ENCODE measurements at regions of chr16 and their contacts with region 1.

Region 1: GRCh38 chr16:9090960-9091866 is at the start of gene HAPSTR1:
- DNase-seq: peak; percentile 98 to 99
- H3K4me3 ChIP-seq: peak within 1 kb of the TSS; percentile 96
- H3K27ac ChIP-seq: peak within 1 kb of the TSS; percentile 66
- H3K4me1 ChIP-seq: peaks cover 24% of the 10 kb centered on the region
- H3K27me3 ChIP-seq: no peaks in the 10 kb centered on the region
- CTCF ChIP-seq: no peak
- total RNA-seq, gene HAPSTR1: 61.1 and 82.8 TPM in 2 replicates

Region 2: GRCh38 chr16:8868416-8869211 is 222.6 kb before region 1 on chr16 and contains the start of gene CARHSP1:
- CTCF ChIA-PET with region 1: interaction called, 4 read pairs
- POLR2A ChIA-PET with region 1: interaction called, 45 read pairs
- intact Hi-C with region 1: loop called (anchors 10 kb)
- DNase-seq: peak; percentile 83 to 90
- H3K4me3 ChIP-seq: peak within 1 kb of the TSS; percentile 88
- H3K27ac ChIP-seq: peak within 1 kb of the TSS; percentile 55
- H3K4me1 ChIP-seq: peaks cover 41% of the 10 kb centered on the region
- H3K27me3 ChIP-seq: no peaks in the 10 kb centered on the region
- CTCF ChIP-seq: no peak
- total RNA-seq, gene CARHSP1: 179 and 186 TPM in 2 replicates

Region 3: DNA sequence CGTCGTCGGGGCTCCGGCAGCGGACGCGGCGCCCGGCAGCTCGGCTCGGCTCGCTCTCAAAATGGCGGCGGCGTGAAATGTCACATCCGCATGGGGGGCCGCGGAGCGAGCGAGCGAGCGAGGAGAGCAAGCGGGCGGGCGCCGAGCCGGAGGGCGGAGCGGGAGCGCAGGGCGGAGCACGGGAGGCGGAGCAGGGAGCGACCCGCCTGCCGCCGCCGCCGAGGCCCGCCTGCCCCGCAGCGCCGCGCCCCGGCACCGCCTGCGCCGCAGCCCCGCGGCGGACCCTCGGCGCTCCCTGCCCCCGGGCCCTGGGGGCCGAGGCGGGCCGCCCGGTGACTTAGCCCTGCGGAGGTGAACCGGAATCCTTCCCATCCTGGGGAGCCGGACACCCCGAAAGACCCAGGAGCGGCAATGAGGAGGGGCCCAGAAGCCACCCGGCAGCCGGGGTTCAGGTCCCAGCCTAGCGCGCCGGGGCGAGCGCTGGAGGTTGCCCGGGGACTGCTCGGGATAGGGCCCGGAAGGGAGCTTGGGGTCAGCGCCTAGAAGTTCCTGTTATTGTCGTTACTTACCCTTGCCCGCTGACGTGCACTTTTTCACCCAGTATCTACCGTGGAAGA is 127.3 kb before region 1 on chr16 and contains the start of gene USP7:
- CTCF ChIA-PET with region 1: no interaction called
- POLR2A ChIA-PET with region 1: interaction called, 7 read pairs
- intact Hi-C with region 1: loop called (anchors 2 kb)
- DNase-seq: peak; percentile 48 to 92
- H3K4me3 ChIP-seq: peak within 1 kb of the TSS; percentile 76
- H3K27ac ChIP-seq: no peak within 1 kb of the TSS; the same call in 1 of the 2 replicates
- H3K4me1 ChIP-seq: peaks cover 46% of the 10 kb centered on the region
- H3K27me3 ChIP-seq: no peaks in the 10 kb centered on the region
- CTCF ChIP-seq: no peak
- total RNA-seq, gene USP7: 113 and 167 TPM in 2 replicates

Region 4: GRCh38 chr16:9068886-9069285 is 22.3 kb before region 1 on chr16:
- CTCF ChIA-PET with region 1: no interaction called
- POLR2A ChIA-PET with region 1: interaction called, 13 read pairs
- intact Hi-C with region 1: no loop called
- DNase-seq: no peak
- H3K4me3 ChIP-seq: no peak overlapping the region
- H3K27ac ChIP-seq: peak overlapping the region; percentile 56; the same call in 1 of the 2 replicates
- H3K4me1 ChIP-seq: peaks cover 30% of the 10 kb centered on the region
- H3K27me3 ChIP-seq: no peaks in the 10 kb centered on the region
- CTCF ChIP-seq: no peak

Region 5: GRCh38 chr16:9123871-9124270 is 32.7 kb after region 1 on chr16:
- CTCF ChIA-PET with region 1: no interaction called
- POLR2A ChIA-PET with region 1: interaction called, 9 read pairs
- intact Hi-C with region 1: loop called (anchors 1 kb)
- DNase-seq: peak; percentile 90 to 94
- H3K4me3 ChIP-seq: no peak overlapping the region; the same call in 1 of the 2 replicates
- H3K27ac ChIP-seq: peak overlapping the region; percentile 87
- H3K4me1 ChIP-seq: peaks cover 66% of the 10 kb centered on the region
- H3K27me3 ChIP-seq: no peaks in the 10 kb centered on the region
- CTCF ChIP-seq: no peak

Measured in PC-9 (cell line).